Thyroid gland (tissue), 4 donors: ENCODE measurements at regions of chr11 and their contacts with region 1.

Region 1: GRCh38 chr11:122197055-122197987 is 81.3 kb upstream of the BLID start:
- DNase-seq: no peak
- H3K4me3 ChIP-seq: no peak overlapping the region
- H3K27ac ChIP-seq: no peak overlapping the region
- H3K4me1 ChIP-seq: peaks cover 3 to 28% of the 10 kb centered on the region in 2 donors
- H3K27me3 ChIP-seq: no peaks in the 10 kb centered on the region
- CTCF ChIP-seq: no peak
- POLR2A ChIP-seq: no peak

Region 2: DNA sequence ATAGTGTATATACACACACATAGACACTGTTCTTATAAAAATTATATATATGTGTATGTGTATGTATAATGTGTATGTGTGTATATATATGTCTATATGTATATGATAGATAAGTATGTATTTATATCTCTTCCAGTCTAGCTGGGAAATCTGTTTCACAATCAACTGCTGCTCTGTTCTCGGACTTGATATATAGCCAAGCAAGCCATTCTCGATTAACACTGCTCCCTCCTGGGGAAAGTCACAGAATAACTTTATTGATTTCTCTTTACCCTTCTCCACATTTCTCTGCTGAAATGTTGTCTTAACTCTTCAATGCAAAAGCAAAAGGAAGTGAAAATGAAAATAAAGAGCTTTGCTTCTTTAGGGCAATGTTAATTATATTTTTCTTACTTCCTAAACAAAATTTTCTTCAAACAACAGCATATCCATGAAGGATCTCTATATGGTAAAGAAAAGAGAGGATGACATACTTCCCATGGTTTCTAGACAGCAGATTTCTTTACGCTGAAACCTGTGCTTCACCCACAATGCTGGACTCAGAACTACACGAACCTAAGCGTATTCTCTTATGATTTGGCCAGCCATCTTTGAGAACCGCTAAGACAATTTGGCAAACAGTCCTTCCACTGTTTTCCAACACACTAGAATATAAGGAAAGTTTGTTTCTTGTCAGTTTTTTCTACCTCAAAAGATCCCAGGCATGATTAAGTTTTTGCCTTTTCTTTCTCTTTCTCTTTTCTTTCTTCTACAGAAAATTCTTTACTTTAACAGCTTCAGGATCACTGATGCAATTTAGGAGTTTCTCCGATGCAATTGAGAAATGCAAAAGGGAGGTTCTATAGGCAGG is 83.3 kb before region 1 on chr11:
- intact Hi-C with region 1: loop called (anchors 5 kb)
- DNase-seq: no peak
- H3K4me3 ChIP-seq: no peak overlapping the region
- H3K27ac ChIP-seq: no peak overlapping the region
- H3K4me1 ChIP-seq: peaks cover 6 to 7% of the 10 kb centered on the region in 2 donors
- H3K27me3 ChIP-seq: no peaks in the 10 kb centered on the region
- CTCF ChIP-seq: no peak
- POLR2A ChIP-seq: no peak